ENCODE measurements at regions of chr10 and their contacts with region 1.

Region 1: DNA sequence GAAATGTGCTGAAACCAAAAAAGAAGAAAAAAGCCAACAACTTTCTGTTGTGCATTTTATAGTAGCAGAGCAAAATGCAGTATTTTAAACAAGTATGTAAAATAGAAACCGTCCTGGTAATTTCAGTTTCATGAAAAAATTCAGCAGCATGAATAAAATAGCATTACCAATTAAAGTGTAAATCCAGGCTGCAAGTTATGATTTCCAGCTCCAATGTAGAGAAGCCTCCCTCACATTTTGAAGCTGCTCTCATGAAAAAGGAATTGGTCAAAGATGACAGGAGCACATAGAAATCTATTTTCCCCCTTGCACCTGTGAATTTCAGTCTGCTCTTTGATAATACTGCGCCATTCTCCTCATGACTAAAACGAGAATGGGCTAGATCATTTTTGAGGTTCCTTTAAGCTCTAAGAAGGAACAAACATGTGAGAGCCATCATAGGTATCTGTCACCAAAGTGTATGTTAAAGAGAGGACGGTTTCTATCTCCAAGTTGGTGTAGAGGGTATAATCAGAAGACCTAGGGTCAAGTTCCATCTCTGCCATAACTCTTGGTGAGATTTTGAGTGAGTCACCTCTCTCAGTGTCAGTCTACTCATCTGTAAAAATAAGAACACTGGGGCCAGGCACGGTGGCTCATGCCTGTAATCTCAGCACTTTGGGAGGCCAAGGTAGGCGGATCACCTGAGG is 107.5 kb downstream of the MTPAP start:
- DNase-seq: no peak
- H3K4me3 ChIP-seq: no peak overlapping the region
- H3K27ac ChIP-seq: no peak overlapping the region
- H3K4me1 ChIP-seq: no peaks in the 10 kb centered on the region
- H3K27me3 ChIP-seq: no peaks in the 10 kb centered on the region
- CTCF ChIP-seq: no peak

Region 2: DNA sequence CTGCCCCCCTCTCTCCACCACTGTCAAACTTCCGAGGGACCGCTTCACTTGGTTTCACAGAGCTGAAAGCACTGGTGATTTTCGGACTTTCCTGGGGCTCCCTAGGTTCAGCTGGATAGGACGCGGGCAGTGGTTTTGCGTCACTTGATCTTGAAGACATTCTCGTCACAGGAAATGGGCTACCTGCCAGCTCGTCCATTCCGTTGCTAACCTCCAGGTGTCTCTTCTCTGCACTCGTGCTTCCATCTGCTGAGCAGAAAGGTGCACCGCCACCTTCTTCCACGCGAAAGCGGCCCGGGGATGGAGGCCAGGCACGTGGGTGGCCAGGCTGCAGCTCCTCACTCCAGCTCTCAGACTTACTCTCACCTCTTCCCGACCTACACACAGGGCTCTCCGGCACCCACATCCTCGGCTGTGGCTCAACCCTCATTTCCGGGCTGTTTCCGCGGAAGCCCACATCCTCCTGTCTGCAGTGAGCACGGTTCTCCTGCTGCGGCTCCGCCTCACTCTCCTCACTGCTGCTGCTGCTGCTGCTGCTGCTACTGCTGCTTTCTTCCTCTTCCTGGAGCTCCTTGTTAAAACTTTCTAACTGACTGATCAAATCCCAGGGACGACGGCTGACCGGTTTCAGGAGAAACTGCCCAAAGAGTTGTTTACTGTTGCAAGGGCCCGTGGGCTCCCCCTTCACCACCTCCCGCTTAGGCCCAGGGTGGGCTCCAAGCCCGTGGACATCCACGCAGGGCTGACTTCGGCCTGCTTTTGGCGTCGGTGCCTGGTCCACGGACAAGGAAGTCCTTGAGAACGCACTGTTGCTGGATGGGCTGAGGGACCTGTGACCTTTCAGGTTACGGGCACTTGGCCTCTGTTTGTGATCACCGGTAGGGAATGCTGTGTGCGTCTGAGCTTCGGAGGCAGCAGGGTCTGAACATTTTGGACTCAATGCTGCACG is 214.2 kb before region 1 on chr10:
- CTCF ChIA-PET with region 1: interaction called, 4 read pairs
- dilution Hi-C with region 1: no loop called
- in situ Hi-C with region 1: loop called in 1 of 2 experiments (anchors 25 kb)
- intact Hi-C with region 1: loop called (anchors 1 kb)
- DNase-seq: peak; percentile 61
- H3K4me3 ChIP-seq: peak overlapping the region; percentile 13 to 28 (median 22)
- H3K27ac ChIP-seq: no peak overlapping the region
- H3K4me1 ChIP-seq: peaks cover 6% of the 10 kb centered on the region
- H3K27me3 ChIP-seq: no peaks in the 10 kb centered on the region
- CTCF ChIP-seq: peak; percentile 31 to 63

Region 3: DNA sequence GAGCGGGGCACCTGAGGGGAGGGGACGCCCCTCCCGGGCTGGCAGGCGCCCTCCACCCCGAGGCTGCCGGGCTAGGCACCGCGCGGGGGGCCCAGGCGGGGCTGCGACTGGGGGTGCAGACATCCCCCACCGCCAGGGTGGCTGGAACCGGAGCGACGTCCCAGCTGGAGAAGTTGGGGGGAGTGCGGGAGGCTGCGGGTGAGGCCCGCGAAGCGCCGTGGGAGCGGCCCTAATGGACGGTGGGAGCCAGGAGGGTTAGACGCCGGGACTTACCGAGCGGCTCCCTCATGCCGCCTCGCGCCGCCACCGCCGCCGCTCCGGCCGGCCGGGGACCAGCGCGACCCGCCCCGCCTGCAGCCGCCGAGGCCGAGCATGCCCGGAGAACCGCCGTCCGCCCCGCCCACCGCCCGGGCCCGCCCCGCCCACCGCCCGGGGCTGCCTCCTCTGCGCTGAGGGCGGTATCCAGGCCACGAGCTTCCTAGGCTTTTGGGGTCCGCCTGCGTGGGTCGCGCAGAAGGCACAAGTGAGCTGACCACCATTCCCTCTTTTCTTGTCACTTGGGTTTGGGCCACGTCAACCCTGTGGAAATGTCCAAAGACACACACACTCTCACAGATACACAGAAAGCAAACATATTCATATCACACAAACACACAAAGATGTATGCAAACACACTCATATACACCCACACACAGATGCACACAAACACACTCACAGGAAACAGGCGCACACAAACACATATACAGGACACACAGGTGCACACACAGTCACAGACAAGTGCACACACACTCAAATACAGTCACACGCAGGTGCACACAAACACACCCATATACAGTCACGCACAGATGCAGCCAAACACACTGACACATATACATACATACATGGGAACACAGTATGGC is 182.1 kb before region 1 on chr10 and contains the start of gene JCAD:
- CTCF ChIA-PET with region 1: no interaction called
- dilution Hi-C with region 1: no loop called
- in situ Hi-C with region 1: no loop called
- intact Hi-C with region 1: no loop called
- DNase-seq: peak; percentile 15
- H3K4me3 ChIP-seq: peak within 1 kb of the TSS; percentile 51 to 61 (median 54)
- H3K27ac ChIP-seq: no peak within 1 kb of the TSS
- H3K4me1 ChIP-seq: peaks cover 7% of the 10 kb centered on the region
- H3K27me3 ChIP-seq: peaks cover 5% of the 10 kb centered on the region
- CTCF ChIP-seq: no peak
- total RNA-seq, gene JCAD: 0.17 to 0.21 TPM

Region 4: DNA sequence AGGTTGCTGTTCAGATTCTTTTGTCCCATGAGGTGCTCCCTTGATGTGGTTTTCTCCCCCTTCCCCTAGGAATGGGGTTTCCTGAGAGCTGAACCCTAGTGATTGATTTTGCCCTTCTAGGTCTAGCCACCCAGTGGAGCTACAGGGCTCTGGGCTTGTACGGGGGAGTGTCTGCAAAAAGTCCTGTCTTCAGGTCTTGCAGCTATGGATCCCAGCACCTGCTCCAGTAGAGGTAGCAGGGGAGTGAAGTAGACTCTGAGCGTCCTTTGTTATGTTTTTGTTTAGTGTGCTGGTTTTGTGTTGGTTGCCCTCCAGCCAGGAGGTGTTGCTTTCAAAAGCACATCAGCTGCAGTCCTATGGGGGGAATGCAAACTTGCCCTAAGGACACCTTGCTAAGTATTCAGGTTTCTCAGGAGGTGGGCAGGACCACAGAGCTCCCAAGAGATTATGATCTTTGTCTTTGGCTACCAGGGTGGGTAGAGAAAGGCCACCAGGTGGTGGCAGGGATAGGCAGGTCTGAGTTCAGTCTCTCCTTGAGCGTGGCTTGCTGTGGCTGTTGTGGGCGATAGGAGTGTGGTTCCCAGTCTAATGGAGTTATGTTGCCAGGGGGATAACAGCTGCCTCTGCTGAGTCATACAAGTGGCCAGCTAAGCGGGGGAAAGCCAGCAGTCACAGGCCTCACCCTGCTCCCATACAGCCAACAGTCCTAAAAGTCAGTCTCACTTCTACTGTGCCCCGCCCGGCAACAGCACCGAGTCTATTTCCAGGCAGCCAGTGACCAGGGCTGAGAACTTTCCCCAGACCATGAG is 89.8 kb before region 1 on chr10:
- CTCF ChIA-PET with region 1: no interaction called
- dilution Hi-C with region 1: no loop called
- in situ Hi-C with region 1: no loop called
- intact Hi-C with region 1: loop called (anchors 1 kb)
- DNase-seq: peak; percentile 94
- H3K4me3 ChIP-seq: no peak overlapping the region
- H3K27ac ChIP-seq: peak overlapping the region; percentile 36
- H3K4me1 ChIP-seq: peaks cover 9% of the 10 kb centered on the region
- H3K27me3 ChIP-seq: no peaks in the 10 kb centered on the region
- CTCF ChIP-seq: peak; percentile 13 to 37

Measured in mammary epithelial cell (primary cell).